Dendritic cell treated with granulocyte-macrophage colony-stimulating factor and Interleukin-4, amounts not matched to agents 40 ng/mL and 50 ng/mL, for 4 days (primary cell): ENCODE measurements at regions of chr17 and their contacts with region 1.

Region 1: GRCh38 chr17:47663912-47664625 is 14.3 kb downstream of the KPNB1 start:
- H3K4me3 Mint-ChIP-seq: no peak overlapping the region
- H3K27ac Mint-ChIP-seq: no peak overlapping the region
- H3K4me1 Mint-ChIP-seq: peaks cover 13% of the 10 kb centered on the region
- H3K27me3 Mint-ChIP-seq: no peaks in the 10 kb centered on the region

Region 2: DNA sequence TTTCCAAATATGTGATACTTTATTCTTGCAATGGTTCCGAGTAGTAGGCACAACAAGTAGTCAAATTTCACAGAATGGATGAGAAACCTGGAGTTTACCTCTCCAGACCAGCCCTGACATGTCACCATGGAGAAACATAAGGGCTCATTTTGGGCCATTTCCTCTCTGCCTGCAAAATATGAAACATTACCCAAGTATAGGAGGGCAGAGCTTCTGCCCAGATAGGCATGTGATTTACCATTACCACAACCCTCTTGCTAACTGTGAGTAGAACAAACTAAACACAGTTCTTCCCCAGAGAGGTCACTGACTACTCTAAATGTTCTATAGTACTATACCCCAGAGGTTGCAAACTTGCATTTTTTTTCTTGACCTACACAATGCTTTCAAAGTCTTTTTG is 30.1 kb before region 1 on chr17:
- intact Hi-C with region 1: no loop called
- H3K4me3 Mint-ChIP-seq: no peak overlapping the region
- H3K27ac Mint-ChIP-seq: no peak overlapping the region
- H3K4me1 Mint-ChIP-seq: peaks cover 15% of the 10 kb centered on the region
- H3K27me3 Mint-ChIP-seq: no peaks in the 10 kb centered on the region

Region 3: DNA sequence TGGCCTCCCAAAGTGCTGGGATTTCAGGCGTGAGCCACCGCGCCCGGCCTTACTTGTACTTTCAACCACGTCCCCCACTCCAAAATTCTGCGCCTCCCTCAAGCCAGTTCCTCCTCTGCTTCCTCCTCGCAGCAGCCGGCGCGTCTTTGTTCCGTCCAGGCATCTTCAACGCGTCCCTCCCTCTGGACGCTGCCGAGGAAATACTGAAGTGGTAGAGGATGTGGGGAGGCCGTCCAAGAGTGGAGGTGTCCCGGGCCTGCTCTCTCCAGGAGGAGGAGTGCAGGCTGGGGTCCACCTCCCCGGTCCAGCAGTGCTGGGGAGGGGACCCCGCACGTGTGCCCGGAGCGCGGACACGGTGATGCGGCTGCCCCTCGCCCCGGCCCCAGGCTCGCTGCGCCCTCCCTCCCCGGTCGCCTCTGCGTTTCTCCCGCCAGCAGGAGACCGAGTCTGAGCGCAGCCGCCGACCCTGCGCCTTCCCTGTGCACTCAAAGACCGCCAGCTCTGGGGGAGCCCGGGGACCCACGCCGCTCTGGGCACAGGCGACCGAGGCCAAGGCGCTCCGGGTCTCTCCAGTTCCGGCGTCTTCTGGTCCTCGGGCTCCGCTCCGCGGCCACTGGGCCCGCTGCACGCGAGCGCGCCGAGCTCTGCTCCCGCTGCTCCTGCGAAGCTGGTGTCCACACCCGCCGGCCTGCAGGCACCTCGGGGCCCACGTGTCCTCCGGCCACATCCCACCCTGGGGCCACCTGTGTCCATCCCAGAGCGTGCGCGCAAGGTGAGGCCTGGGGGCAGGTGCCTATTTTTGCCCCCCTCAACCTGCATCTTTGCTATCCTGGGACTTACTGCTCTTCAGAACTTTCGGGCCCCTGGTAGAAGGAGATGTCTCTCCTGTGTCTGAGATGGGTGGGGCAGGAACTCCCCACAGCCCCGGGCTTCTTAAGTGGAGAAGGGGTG is 125.8 kb after region 1 on chr17:
- intact Hi-C with region 1: loop called (anchors 10 kb)
- H3K4me3 Mint-ChIP-seq: peak overlapping the region; percentile 49
- H3K27ac Mint-ChIP-seq: no peak overlapping the region
- H3K4me1 Mint-ChIP-seq: peaks cover 10% of the 10 kb centered on the region
- H3K27me3 Mint-ChIP-seq: peaks cover 79% of the 10 kb centered on the region